ENCODE measurements at regions of chr4 and their contacts with region 1.

Region 1: GRCh38 chr4:73019462-73020047 is 50.0 kb downstream of the COX18 start:
- DNase-seq: no peak
- ATAC-seq: no peak
- H3K4me3 ChIP-seq: no peak overlapping the region
- H3K27ac ChIP-seq: no peak overlapping the region
- H3K4me1 ChIP-seq: no peaks in the 10 kb centered on the region
- H3K27me3 ChIP-seq: no peaks in the 10 kb centered on the region
- CTCF ChIP-seq: peak in 4 of 5 experiments; percentile 23 to 59 (median 36)
- POLR2A ChIP-seq: no peak

Region 2: DNA sequence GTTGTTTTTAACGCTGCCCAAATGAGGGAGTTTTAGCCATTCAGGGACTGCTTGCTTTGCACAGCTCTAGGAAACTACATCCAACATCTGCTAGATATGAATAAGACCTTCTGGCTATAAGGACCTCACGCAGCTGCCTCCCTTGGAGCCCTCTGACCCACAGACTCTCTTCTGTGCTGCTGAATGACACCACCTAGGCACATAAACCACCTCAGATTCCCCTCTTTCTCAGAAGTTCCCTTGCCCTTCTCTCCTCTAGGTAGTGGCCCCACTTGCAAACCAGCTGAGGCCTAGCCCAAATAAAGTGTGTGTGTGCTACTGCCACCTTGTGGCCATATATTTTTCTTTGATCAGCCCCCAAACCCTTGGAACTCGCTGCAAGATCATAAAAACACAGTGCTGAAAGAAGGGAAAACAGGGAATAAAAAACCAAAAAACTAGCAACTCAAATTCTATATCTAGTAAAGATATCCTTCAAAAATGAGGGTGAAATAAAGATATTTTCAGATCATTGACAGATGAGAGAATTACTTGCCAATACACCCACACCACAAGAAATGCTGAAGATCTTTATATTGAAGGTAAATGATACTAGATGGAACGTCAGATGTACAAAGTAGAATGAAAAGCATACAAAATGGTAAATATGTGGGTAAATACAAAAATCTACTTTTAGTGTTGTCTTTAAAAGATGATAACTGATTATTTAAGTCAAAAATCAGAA is 716.4 kb before region 1 on chr4:
- in situ Hi-C with region 1: loop called in 1 of 4 experiments (anchors 25 kb)
- intact Hi-C with region 1: no loop called
- DNase-seq: no peak
- ATAC-seq: no peak
- H3K4me3 ChIP-seq: no peak overlapping the region
- H3K27ac ChIP-seq: no peak overlapping the region
- H3K4me1 ChIP-seq: no peaks in the 10 kb centered on the region
- H3K27me3 ChIP-seq: no peaks in the 10 kb centered on the region
- CTCF ChIP-seq: peak in 3 of 5 experiments; percentile 26 to 54 (median 45)
- POLR2A ChIP-seq: no peak

Region 3: GRCh38 chr4:72505314-72505744 is 514.2 kb before region 1 on chr4:
- in situ Hi-C with region 1: loop called in 1 of 4 experiments (anchors 25 kb)
- intact Hi-C with region 1: no loop called
- DNase-seq: no peak
- ATAC-seq: no peak
- H3K4me3 ChIP-seq: no peak overlapping the region
- H3K27ac ChIP-seq: no peak overlapping the region
- H3K4me1 ChIP-seq: no peaks in the 10 kb centered on the region
- H3K27me3 ChIP-seq: no peaks in the 10 kb centered on the region
- CTCF ChIP-seq: peak in 4 of 5 experiments; percentile 18 to 44 (median 30)
- POLR2A ChIP-seq: no peak

Region 4: DNA sequence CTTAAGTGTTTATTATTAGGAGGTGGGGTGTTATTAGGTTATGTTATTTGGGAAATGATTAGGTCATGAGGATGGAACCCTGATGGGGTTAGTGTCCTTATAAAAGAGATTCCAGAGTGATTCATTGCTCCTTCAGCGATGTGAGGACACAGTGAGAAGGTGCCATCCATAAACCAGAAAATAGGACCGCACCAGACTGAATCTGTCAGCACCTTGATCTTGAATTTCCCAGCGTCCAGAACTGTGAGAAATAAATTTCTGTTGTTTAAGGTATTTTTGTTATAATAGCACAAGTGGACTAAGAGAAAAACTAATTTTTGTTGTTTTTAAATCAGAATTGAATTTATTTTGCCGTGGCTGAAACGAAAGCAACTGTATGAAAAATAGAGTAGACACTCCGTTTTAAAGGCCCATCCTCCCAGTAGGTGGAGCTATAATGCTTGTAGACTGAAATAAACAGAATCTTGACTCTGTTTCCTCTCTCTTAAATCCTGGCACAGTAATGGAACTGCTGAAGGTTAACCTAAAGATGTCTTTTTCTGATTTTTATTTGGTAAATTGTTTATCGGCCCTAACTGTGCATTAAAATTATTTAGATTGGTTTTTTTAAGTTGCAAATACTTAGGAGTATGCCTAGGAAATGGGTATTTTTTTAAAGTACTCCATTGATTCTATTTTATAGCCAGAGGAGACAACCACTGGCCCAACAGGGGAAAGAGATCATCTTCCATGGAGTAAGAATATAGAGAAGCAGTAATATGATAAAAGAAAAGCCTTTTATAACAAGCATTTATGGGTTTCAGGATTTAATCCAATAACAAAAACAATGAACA is 317.4 kb before region 1 on chr4:
- in situ Hi-C with region 1: loop called in 1 of 4 experiments (anchors 25 kb)
- intact Hi-C with region 1: loop called (anchors 2 kb)
- DNase-seq: no peak
- ATAC-seq: peak in 1 of 2 donors; percentile 56
- H3K4me3 ChIP-seq: peak overlapping the region in 3 of 4 donors; percentile 28 to 42 (median 36)
- H3K27ac ChIP-seq: no peak overlapping the region
- H3K4me1 ChIP-seq: no peaks in the 10 kb centered on the region
- H3K27me3 ChIP-seq: no peaks in the 10 kb centered on the region
- CTCF ChIP-seq: peak in 3 of 5 experiments; percentile 27 to 53 (median 45)
- POLR2A ChIP-seq: no peak